ENCODE measurements at regions of chr19 and their contacts with region 1.

Region 1: GRCh38 chr19:9934132-9934950 is 2.0 kb downstream of the OLFM2 start:
- DNase-seq: peak; percentile 73 to 80 (median 79)
- H3K4me3 ChIP-seq: no peak overlapping the region
- H3K4me3 Mint-ChIP-seq: peak overlapping the region in 6 of 8 donors; percentile 13 to 63 (median 42)
- H3K27ac ChIP-seq: no peak overlapping the region
- H3K27ac Mint-ChIP-seq: peak overlapping the region in 3 of 7 donors; percentile 19 to 52 (median 26)
- H3K4me1 ChIP-seq: peaks cover 30% of the 10 kb centered on the region
- H3K4me1 Mint-ChIP-seq: peaks cover 15 to 34% (median 26%) of the 10 kb centered on the region in 4 donors
- H3K27me3 ChIP-seq: peaks cover 24% of the 10 kb centered on the region
- H3K27me3 Mint-ChIP-seq: peaks cover 39 to 51% of the 10 kb centered on the region in 2 donors

Region 2: DNA sequence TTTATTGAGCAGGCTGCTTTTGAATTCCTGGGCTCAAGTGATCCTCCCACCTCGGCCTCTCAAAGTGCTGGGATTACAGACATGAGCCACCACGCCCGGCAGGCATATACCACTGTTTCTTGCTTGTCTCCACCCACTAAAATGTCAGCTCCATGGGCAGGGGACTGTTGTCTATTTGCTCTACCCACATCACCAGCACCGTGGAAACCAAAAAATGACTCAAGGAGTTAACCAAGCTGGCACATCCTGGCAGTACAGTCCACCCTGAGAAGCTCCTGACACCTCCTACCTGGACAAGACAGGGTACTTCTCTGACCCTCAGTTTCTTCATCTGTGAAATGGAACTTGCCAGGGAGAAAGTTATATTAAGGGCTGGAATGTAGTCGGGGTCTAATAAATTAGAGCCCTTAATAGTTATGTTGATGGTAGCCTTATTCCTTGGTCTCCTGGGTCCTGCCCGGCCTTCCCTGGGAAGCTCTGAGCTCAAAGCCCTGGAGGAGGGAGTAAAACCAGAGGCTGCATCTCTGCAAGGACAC is 92.9 kb after region 1 on chr19:
- CTCF ChIA-PET with region 1: interaction called, 74 read pairs
- POLR2A ChIA-PET with region 1: interaction called, 6 read pairs
- intact Hi-C with region 1: loop called (anchors 1 kb)
- DNase-seq: no peak
- H3K4me3 ChIP-seq: no peak overlapping the region
- H3K4me3 Mint-ChIP-seq: no peak overlapping the region
- H3K27ac ChIP-seq: no peak overlapping the region
- H3K27ac Mint-ChIP-seq: no peak overlapping the region
- H3K4me1 ChIP-seq: peaks cover 7% of the 10 kb centered on the region
- H3K4me1 Mint-ChIP-seq: peaks cover 0 to 4% (median 2%) of the 10 kb centered on the region in 4 donors
- H3K27me3 ChIP-seq: peaks cover 8% of the 10 kb centered on the region
- H3K27me3 Mint-ChIP-seq: peaks cover 15 to 18% of the 10 kb centered on the region in 2 donors

Region 3: DNA sequence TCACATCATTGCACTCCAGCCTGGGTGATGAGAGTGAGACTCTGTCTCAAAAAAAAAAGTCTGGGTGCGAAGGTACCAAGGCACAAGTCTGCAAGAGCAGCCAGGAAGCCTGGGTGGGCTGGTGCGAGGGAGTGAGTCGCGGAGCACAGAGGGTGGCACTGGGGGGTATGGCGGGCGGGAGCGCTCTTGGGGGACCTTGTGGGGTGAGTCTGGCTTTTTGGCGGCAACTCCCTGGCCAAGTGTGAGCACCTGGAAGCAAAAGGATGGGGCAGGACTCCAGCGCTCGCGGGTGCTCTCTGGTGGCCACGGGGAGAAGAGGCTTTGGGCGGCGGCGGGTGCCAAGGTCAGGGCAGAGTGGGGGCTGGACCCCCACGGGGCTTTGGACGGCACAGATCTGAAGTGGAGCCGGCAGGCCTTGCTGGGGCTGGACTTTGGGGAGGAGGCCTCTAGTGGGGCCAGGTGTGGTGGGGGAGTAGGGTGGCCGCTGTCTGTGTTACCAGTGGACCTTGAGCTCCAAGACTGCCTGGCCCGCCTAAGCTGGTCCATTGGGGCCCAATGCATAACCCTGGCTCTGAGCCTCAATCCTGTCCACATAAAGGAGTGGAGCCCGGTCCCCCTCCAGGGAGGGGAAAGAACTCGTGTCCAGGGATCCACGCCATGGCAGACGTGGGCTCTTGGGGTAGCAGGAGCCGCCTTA is 178.7 kb after region 1 on chr19:
- CTCF ChIA-PET with region 1: interaction called, 3 read pairs
- POLR2A ChIA-PET with region 1: no interaction called
- intact Hi-C with region 1: loop called (anchors 2 kb)
- DNase-seq: peak; percentile 65 to 77 (median 68)
- H3K4me3 ChIP-seq: no peak overlapping the region
- H3K4me3 Mint-ChIP-seq: peak overlapping the region; percentile 55 to 89 (median 78)
- H3K27ac ChIP-seq: peak overlapping the region; percentile 66
- H3K27ac Mint-ChIP-seq: peak overlapping the region; percentile 91 to 97 (median 95)
- H3K4me1 ChIP-seq: peaks cover 56% of the 10 kb centered on the region
- H3K4me1 Mint-ChIP-seq: peaks cover 22 to 74% (median 31%) of the 10 kb centered on the region in 4 donors
- H3K27me3 ChIP-seq: no peaks in the 10 kb centered on the region
- H3K27me3 Mint-ChIP-seq: no peaks in the 10 kb centered on the region

Region 4: DNA sequence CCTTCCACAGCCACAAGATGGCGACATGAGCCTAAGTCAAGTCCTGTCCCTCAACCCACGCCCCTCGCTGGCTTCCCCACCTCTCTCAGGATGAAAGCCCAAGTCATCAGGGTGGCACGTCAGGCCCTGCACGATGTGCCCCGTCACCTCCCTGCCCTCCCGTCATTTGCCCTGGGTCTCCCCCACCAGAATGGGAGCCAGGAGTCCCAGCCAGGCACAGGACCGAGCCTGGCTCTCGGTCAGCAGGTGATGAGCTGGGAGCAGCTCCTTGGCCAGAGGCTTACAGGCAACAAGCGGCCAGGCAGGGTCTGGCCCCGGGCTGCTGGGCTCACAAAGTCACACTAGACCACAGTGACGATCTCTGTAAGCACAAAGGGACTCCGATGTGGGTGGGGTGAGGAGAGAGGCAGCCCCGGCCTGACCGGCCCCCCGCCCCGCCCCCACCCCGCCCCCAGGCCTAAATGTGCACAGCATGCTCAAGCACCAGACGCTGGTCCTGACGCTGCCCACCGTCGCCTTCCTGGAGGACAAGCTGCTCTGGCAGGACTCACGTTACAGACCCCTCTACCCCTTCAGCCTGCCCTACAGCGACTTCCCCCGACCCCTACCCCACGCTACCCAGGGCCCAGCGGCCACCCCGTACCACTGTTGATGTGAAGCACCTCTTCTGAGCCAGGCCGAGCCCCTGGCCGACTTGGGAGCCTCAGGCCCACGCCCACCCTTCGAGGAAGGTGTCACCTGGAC is 325.0 kb after region 1 on chr19:
- CTCF ChIA-PET with region 1: interaction called, 14 read pairs
- POLR2A ChIA-PET with region 1: no interaction called
- intact Hi-C with region 1: no loop called
- DNase-seq: peak; percentile 82 to 94 (median 86)
- H3K4me3 ChIP-seq: no peak overlapping the region
- H3K4me3 Mint-ChIP-seq: peak overlapping the region in 1 of 8 donors; percentile 68
- H3K27ac ChIP-seq: peak overlapping the region; percentile 16
- H3K27ac Mint-ChIP-seq: peak overlapping the region in 4 of 7 donors; percentile 17 to 76 (median 54)
- H3K4me1 ChIP-seq: peaks cover 20% of the 10 kb centered on the region
- H3K4me1 Mint-ChIP-seq: peaks cover 5 to 17% (median 8%) of the 10 kb centered on the region in 4 donors
- H3K27me3 ChIP-seq: no peaks in the 10 kb centered on the region
- H3K27me3 Mint-ChIP-seq: no peaks in the 10 kb centered on the region

Measured in CD4-positive, alpha-beta memory T cell (primary cell).